ENCODE measurements at regions of chr14 and their contacts with region 1.

Region 1: DNA sequence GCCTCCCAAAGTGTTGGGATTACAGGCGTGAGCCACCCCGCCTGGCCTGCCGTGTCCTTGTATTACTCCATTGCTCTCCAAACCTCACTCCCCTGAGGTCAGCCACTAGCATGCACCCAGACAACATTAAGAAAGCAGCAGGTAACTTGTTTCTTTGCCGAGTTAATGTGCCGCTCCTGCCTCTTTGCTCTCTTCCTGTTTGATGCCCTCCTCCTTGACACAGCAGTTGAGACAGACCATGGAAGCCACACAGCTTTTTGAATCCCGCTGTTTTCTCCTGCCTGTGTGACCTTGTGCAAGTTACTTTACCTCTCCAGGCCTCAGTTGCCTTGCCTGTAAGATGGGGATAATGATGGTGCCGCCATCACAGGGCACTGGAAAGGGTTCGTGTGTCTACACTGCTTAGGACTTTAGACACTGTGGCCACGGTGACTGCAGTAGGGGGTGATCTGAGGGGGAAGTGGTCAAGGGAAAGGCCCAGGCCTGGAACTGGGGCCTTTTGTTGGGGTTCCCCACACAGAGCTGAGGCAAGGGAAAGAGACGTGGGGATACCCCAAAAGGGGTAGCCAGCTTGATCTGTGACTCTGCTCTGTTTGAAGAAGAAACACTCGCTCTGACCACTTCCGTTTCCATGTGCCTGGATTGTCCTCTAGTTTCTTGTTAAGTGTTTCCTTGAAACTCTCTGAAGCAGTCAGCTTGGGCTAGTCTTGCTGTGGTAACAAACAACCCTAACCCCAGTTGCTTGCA is 69.3 kb downstream of the RIN3 start:
- DNase-seq: no peak
- H3K4me3 ChIP-seq: no peak overlapping the region
- H3K27ac ChIP-seq: no peak overlapping the region
- H3K4me1 ChIP-seq: no peaks in the 10 kb centered on the region
- H3K27me3 ChIP-seq: no peaks in the 10 kb centered on the region
- CTCF ChIP-seq: no peak
- POLR2A ChIP-seq: no peak

Region 2: DNA sequence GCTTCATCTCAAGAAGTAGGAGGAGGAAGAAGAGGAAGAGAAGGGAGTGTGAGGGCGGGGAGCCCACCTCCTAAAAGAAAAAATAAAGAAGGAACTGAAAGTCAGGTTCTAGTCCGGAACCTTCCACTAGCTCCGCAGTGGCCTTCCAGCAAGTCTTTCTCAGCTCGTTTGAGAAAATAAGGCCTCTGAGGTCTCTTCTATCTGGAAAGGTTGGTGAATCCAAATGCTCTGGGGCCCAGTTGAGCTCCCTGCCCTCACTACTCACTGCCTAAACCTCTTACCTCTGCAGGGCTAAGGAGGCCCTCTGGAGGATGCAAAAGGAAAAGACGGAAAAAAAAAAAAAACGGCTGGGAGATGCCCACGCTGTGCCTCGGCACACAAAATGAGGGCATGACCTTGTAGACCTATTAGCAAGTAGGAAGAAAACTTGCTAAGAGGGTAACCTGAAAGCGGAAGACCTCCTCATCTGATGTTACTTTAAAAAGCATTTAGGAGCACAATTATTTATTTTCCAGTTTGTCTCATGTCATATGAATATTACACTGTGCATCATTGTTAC is 671.3 kb before region 1 on chr14:
- intact Hi-C with region 1: no loop called
- DNase-seq: no peak
- H3K4me3 ChIP-seq: no peak overlapping the region
- H3K27ac ChIP-seq: peak overlapping the region; percentile 25 to 30
- H3K4me1 ChIP-seq: no peaks in the 10 kb centered on the region
- H3K27me3 ChIP-seq: no peaks in the 10 kb centered on the region
- CTCF ChIP-seq: peak in 2 of 3 donors; percentile 44 to 49
- POLR2A ChIP-seq: no peak

Region 3: GRCh38 chr14:92532505-92533163 is 50.2 kb before region 1 on chr14:
- intact Hi-C with region 1: loop called (anchors 2 kb)
- DNase-seq: no peak
- H3K4me3 ChIP-seq: no peak overlapping the region
- H3K27ac ChIP-seq: no peak overlapping the region
- H3K4me1 ChIP-seq: no peaks in the 10 kb centered on the region
- H3K27me3 ChIP-seq: no peaks in the 10 kb centered on the region
- CTCF ChIP-seq: no peak
- POLR2A ChIP-seq: no peak

Measured in breast epithelium (tissue), 4 donors.